ENCODE measurements at regions of chr6 and their contacts with region 1.

Region 1: DNA sequence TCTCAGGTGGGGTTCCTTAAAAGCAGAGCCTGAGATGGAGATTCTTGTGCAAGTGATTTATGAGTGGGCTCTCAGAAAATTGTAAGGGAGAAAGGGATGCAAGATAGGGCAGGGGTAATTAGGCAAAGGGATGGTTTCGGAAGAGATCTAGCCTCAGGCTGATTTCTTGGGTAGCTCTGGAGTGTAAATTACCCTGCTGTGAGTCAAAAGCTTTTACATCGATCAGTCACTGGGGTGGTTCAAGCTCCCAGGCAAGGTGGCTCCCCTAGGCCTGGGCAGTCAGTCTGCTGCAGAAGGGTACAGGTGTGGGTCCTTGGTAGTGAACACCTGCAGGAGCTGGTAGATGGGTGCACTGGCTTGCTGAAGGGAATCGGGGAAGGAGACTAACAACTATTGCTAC is 11.1 kb upstream of the PM20D2 start:
- DNase-seq: no peak
- H3K4me3 ChIP-seq: no peak overlapping the region
- H3K27ac ChIP-seq: no peak overlapping the region
- H3K4me1 ChIP-seq: peaks cover 0 to 3% (median 0%) of the 10 kb centered on the region in 4 experiments; a peak in 1 of 7 replicates
- H3K27me3 ChIP-seq: peaks cover 3 to 27% (median 15%) of the 10 kb centered on the region in 4 experiments; a peak in 6 of 7 replicates
- CTCF ChIP-seq: no peak
- EP300 ChIP-seq: no peak
- POLR2A ChIP-seq: no peak
- RAD21 ChIP-seq: no peak

Region 2: GRCh38 chr6:89122625-89123024 is 12.1 kb before region 1 on chr6:
- CTCF ChIA-PET with region 1: interaction called, 12 read pairs
- POLR2A ChIA-PET with region 1: interaction called, 5 read pairs
- DNase-seq: no peak
- H3K4me3 ChIP-seq: no peak overlapping the region
- H3K27ac ChIP-seq: no peak overlapping the region
- H3K4me1 ChIP-seq: no peaks in the 10 kb centered on the region
- H3K27me3 ChIP-seq: peaks cover 7 to 16% (median 15%) of the 10 kb centered on the region in 4 experiments
- CTCF ChIP-seq: peak in 2 of 3 experiments; percentile 49 to 57; a peak in 2 of 4 replicates
- EP300 ChIP-seq: no peak
- POLR2A ChIP-seq: no peak
- RAD21 ChIP-seq: peak; percentile 77 to 82

Measured in H1 (cell line).